Calu3 (cell line): ENCODE measurements at regions of chr18 and their contacts with region 1.

Region 1: GRCh38 chr18:37721544-37722522 is 156.2 kb upstream of the CELF4 start:
- DNase-seq: no peak
- H3K4me3 Mint-ChIP-seq: no peak overlapping the region
- H3K27ac Mint-ChIP-seq: no peak overlapping the region
- H3K4me1 Mint-ChIP-seq: no peaks in the 10 kb centered on the region
- H3K27me3 Mint-ChIP-seq: peaks cover 75% of the 10 kb centered on the region
- CTCF ChIP-seq: no peak

Region 2: DNA sequence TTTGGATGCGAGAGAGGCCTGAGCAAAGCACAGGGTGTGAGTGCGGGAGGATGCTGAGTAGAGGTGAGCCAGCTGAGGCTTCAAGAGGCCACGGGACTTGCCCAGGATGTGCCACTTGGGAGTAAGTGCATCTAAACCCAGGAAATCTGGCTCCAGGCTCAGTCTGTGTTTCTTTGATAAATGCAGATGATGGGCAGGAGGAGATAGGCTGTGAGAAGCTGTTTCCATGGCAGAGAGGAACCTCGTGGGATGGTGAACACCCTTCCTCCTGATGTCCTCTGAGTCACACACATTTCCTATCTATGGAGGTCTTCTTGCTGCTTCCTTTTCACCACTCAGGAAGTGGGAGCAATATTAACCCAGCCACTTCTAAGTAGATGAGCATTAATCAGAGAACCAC is 117.8 kb before region 1 on chr18:
- CTCF ChIA-PET with region 1: no interaction called
- intact Hi-C with region 1: loop called (anchors 10 kb)
- DNase-seq: no peak
- H3K4me3 Mint-ChIP-seq: no peak overlapping the region
- H3K27ac Mint-ChIP-seq: no peak overlapping the region
- H3K4me1 Mint-ChIP-seq: no peaks in the 10 kb centered on the region
- H3K27me3 Mint-ChIP-seq: peaks cover 64% of the 10 kb centered on the region
- CTCF ChIP-seq: no peak

Region 3: GRCh38 chr18:37668971-37669747 is 52.7 kb before region 1 on chr18:
- CTCF ChIA-PET with region 1: no interaction called
- intact Hi-C with region 1: no loop called
- DNase-seq: no peak
- H3K4me3 Mint-ChIP-seq: no peak overlapping the region
- H3K27ac Mint-ChIP-seq: no peak overlapping the region
- H3K4me1 Mint-ChIP-seq: peaks cover 11% of the 10 kb centered on the region
- H3K27me3 Mint-ChIP-seq: no peaks in the 10 kb centered on the region
- CTCF ChIP-seq: no peak